Naive thymus-derived CD4-positive, alpha-beta T cell (primary cell): ENCODE measurements at regions of chr7 and their contacts with region 1.

Region 1: DNA sequence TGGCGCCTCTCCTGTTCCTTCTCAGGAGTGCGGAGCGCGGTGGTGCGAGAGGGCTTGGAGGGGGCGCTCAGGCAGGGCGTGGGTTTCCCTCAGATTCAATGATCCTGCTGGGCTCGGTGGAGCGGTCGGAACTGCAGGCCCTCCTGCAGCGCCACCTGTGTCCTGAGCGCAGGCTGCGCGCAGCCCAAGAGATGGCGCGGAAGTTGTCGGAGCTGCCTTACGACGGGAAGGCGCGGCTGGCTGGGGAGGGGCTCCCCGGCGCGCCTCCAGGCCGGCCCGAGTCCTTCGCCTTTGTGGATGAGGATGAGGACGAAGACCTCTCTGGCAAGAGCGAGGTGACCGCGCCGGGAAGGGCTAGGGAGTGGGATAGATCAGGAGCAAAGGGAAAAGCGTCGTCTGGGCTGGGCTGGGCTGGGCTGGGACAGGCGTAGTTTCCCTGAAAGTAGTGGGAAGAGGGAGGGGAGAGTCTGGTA is 17.0 kb downstream of the FAM131B start:
- DNase-seq: peak; percentile 31 to 62 (median 56)
- ATAC-seq: peak; percentile 98
- H3K4me3 ChIP-seq: peak overlapping the region; percentile 29
- H3K4me3 Mint-ChIP-seq: peak overlapping the region; percentile 56 to 87 (median 76)
- H3K27ac ChIP-seq: no peak overlapping the region
- H3K27ac Mint-ChIP-seq: peak overlapping the region in 3 of 9 donors; percentile 3 to 79 (median 56)
- H3K4me1 ChIP-seq: peaks cover 0 to 4% of the 10 kb centered on the region in 2 donors
- H3K4me1 Mint-ChIP-seq: peaks cover 5 to 13% (median 9%) of the 10 kb centered on the region in 7 donors
- H3K27me3 ChIP-seq: no peaks in the 10 kb centered on the region
- H3K27me3 Mint-ChIP-seq: peaks cover 0 to 57% (median 2%) of the 10 kb centered on the region in 5 donors

Region 2: GRCh38 chr7:143334244-143334643 is 11.2 kb before region 1 on chr7:
- CTCF ChIA-PET with region 1: interaction called, 10 read pairs
- POLR2A ChIA-PET with region 1: interaction called, 3 read pairs
- intact Hi-C with region 1: no loop called
- DNase-seq: no peak
- ATAC-seq: no peak
- H3K4me3 ChIP-seq: no peak overlapping the region
- H3K4me3 Mint-ChIP-seq: no peak overlapping the region
- H3K27ac ChIP-seq: no peak overlapping the region
- H3K27ac Mint-ChIP-seq: no peak overlapping the region
- H3K4me1 ChIP-seq: no peaks in the 10 kb centered on the region
- H3K4me1 Mint-ChIP-seq: peaks cover 0 to 2% (median 0%) of the 10 kb centered on the region in 7 donors
- H3K27me3 ChIP-seq: no peaks in the 10 kb centered on the region
- H3K27me3 Mint-ChIP-seq: peaks cover 0 to 54% (median 3%) of the 10 kb centered on the region in 5 donors

Region 3: DNA sequence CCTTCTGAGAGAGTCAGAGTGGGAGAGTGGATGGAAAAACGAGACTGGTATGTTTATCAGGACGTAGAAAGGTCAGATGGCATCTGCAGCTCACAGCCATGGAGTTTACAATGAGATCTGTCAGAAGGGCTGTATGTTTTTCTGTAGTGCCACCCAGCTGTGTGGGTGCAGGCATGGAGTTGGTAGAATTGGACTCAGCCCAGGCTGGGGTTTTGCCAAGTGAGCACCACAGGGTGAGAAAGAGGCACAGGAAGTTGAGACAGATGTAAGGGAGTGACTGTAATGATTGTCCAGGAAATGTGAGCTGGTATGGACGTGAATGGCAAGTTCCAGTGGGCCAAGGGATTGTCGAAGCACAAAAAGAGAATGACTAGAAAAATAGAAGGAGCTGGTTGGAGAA is 26.6 kb after region 1 on chr7:
- CTCF ChIA-PET with region 1: interaction called, 3 read pairs
- POLR2A ChIA-PET with region 1: interaction called, 3 read pairs
- intact Hi-C with region 1: loop called in 1 of 2 experiments (anchors 1 kb)
- DNase-seq: peak in 5 of 9 donors; percentile 38 to 64 (median 46)
- ATAC-seq: peak; percentile 76
- H3K4me3 ChIP-seq: no peak overlapping the region
- H3K4me3 Mint-ChIP-seq: peak overlapping the region in 9 of 10 donors; percentile 13 to 67 (median 45)
- H3K27ac ChIP-seq: no peak overlapping the region
- H3K27ac Mint-ChIP-seq: peak overlapping the region in 8 of 9 donors; percentile 3 to 90 (median 70)
- H3K4me1 ChIP-seq: peaks cover 36 to 40% of the 10 kb centered on the region in 2 donors
- H3K4me1 Mint-ChIP-seq: peaks cover 34 to 59% (median 55%) of the 10 kb centered on the region in 7 donors
- H3K27me3 ChIP-seq: no peaks in the 10 kb centered on the region
- H3K27me3 Mint-ChIP-seq: peaks cover 0 to 22% (median 0%) of the 10 kb centered on the region in 5 donors

Region 4: GRCh38 chr7:143391462-143392404 is 46.3 kb after region 1 on chr7:
- CTCF ChIA-PET with region 1: no interaction called
- POLR2A ChIA-PET with region 1: no interaction called
- intact Hi-C with region 1: no loop called
- DNase-seq: no peak
- ATAC-seq: no peak
- H3K4me3 ChIP-seq: no peak overlapping the region
- H3K4me3 Mint-ChIP-seq: no peak overlapping the region
- H3K27ac ChIP-seq: no peak overlapping the region
- H3K27ac Mint-ChIP-seq: peak overlapping the region in 5 of 9 donors; percentile 21 to 71 (median 62)
- H3K4me1 ChIP-seq: no peaks in the 10 kb centered on the region
- H3K4me1 Mint-ChIP-seq: peaks cover 7 to 25% (median 20%) of the 10 kb centered on the region in 7 donors
- H3K27me3 ChIP-seq: no peaks in the 10 kb centered on the region
- H3K27me3 Mint-ChIP-seq: no peaks in the 10 kb centered on the region

Region 5: GRCh38 chr7:143416565-143417149 is 71.2 kb after region 1 on chr7:
- CTCF ChIA-PET with region 1: interaction called, 3 read pairs
- POLR2A ChIA-PET with region 1: no interaction called
- intact Hi-C with region 1: loop called in 1 of 2 experiments (anchors 1 kb)
- DNase-seq: peak in 6 of 9 donors; percentile 34 to 58 (median 52)
- ATAC-seq: peak; percentile 74
- H3K4me3 ChIP-seq: no peak overlapping the region
- H3K4me3 Mint-ChIP-seq: no peak overlapping the region
- H3K27ac ChIP-seq: no peak overlapping the region
- H3K27ac Mint-ChIP-seq: no peak overlapping the region
- H3K4me1 ChIP-seq: peaks cover 0 to 3% of the 10 kb centered on the region in 2 donors
- H3K4me1 Mint-ChIP-seq: peaks cover 2 to 56% (median 46%) of the 10 kb centered on the region in 7 donors
- H3K27me3 ChIP-seq: no peaks in the 10 kb centered on the region
- H3K27me3 Mint-ChIP-seq: peaks cover 0 to 21% (median 0%) of the 10 kb centered on the region in 5 donors

Region 6: DNA sequence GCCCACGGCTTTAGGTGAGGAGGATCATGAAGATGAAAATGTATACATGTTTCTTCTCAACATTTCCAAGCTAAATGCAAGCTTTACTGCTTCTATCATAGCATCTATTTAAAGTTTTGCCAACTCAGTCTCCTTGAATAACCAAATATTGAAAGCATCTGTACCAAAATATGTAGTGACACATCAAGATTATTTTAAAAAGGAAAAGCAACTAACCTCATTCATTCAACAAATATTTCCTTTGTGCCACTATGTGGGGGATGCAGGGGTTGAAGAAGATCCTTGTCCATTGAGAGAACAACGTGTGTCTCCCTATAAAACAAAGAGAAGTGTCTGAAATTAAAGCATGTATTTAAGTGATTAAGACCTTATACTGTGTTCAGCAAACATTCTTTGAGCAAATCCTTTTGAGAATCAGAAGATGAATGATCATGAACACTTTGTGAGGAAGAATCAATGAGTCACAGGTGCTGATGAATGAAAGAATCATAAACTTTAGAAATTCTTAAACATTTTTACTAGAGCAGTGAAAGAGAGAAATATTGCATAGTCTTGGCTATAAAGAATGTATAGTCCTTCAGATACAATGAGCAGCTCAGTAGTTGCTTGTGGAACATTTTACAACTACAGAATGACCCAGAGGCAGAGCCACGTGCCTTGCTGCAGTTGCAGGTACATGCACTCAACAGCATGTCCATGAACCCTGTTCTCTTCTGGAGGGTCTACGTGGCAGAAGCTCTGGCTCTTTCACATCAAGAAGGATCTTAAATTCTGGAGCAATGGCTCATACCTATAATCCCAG is 111.7 kb after region 1 on chr7:
- CTCF ChIA-PET with region 1: no interaction called
- POLR2A ChIA-PET with region 1: no interaction called
- intact Hi-C with region 1: no loop called
- DNase-seq: no peak
- ATAC-seq: no peak
- H3K4me3 ChIP-seq: no peak overlapping the region
- H3K4me3 Mint-ChIP-seq: no peak overlapping the region
- H3K27ac ChIP-seq: no peak overlapping the region
- H3K27ac Mint-ChIP-seq: no peak overlapping the region
- H3K4me1 ChIP-seq: no peaks in the 10 kb centered on the region
- H3K4me1 Mint-ChIP-seq: peaks cover 0 to 24% (median 21%) of the 10 kb centered on the region in 7 donors
- H3K27me3 ChIP-seq: no peaks in the 10 kb centered on the region
- H3K27me3 Mint-ChIP-seq: peaks cover 0 to 3% (median 0%) of the 10 kb centered on the region in 5 donors